ENCODE measurements at regions of chr3 and their contacts with region 1.

Region 1: GRCh38 chr3:154939334-154939733 is 140.8 kb upstream of the MME start:
- DNase-seq: no peak
- ATAC-seq: no peak
- H3K4me3 ChIP-seq: no peak overlapping the region
- H3K27ac ChIP-seq: no peak overlapping the region
- H3K4me1 ChIP-seq: no peaks in the 10 kb centered on the region
- CTCF ChIP-seq: no peak
- EP300 ChIP-seq: no peak
- POLR2A ChIP-seq: no peak
- RAD21 ChIP-seq: no peak

Region 2: GRCh38 chr3:155097009-155097349 is 157.6 kb after region 1 on chr3:
- CTCF ChIA-PET with region 1: no interaction called
- POLR2A ChIA-PET with region 1: interaction called, 10 read pairs
- DNase-seq: no peak
- ATAC-seq: no peak
- H3K4me3 ChIP-seq: no peak overlapping the region
- H3K27ac ChIP-seq: no peak overlapping the region
- H3K4me1 ChIP-seq: no peaks in the 10 kb centered on the region
- CTCF ChIP-seq: no peak
- EP300 ChIP-seq: no peak
- POLR2A ChIP-seq: no peak
- RAD21 ChIP-seq: no peak

Measured in A549 (cell line).